ENCODE measurements at regions of chr11 and their contacts with region 1.

Region 1: DNA sequence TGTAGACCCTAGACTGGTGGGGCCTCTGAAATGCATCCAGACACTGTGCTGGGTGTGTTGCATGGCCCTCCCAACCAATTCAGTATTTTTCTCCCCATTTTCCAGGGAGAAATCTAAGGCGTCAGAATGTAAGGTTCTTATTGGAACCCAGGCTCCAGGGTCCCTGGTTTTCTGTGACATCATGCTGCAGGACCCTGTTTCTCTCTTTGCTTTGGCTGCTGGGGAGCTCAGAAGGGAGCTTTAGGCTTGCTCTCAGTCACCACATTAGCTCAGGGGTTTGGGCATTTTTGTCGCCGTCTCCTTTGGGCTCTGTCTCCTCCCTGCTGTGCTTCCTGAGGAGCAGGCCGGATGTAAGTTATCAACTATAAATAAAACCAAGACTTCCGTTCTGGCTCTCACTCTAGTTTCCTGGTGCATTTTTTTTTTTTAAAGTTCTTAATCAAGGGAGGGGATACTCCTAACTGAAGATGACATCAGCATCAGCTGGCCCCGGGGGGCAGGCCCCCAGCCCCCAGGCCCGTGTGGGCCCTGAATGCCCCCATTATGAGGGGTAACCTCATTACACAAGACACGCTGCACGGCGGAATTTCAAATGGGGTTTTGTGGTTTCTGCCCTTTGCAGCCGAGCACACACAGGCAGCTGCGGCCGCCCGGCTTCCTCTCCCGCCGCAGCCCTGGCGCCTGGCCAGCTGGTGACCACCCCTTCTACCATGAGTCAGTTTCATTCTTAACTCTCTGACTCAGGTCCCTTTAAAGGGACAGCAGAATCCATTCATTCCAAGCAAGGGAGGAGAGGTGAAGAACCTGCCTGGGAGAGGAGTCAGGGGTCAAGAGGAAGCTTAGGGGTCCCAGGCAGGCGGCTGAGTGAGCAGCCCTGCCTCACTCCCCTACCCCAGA is 3.2 kb downstream of the MYEOV start:
- DNase-seq: peak; percentile 94
- ATAC-seq: peak; percentile 77 to 78
- H3K4me3 ChIP-seq: peak overlapping the region; percentile 39
- H3K27ac ChIP-seq: peak overlapping the region; percentile 88
- H3K4me1 ChIP-seq: peaks cover 79% of the 10 kb centered on the region
- H3K27me3 ChIP-seq: no peaks in the 10 kb centered on the region
- CTCF ChIP-seq: no peak

Region 2: GRCh38 chr11:69436973-69437875 is 140.1 kb after region 1 on chr11:
- intact Hi-C with region 1: no loop called
- DNase-seq: peak; percentile 84
- ATAC-seq: peak; percentile 90 to 92
- H3K4me3 ChIP-seq: no peak overlapping the region
- H3K27ac ChIP-seq: peak overlapping the region; percentile 39
- H3K4me1 ChIP-seq: peaks cover 7% of the 10 kb centered on the region
- H3K27me3 ChIP-seq: no peaks in the 10 kb centered on the region
- CTCF ChIP-seq: no peak

Region 3: DNA sequence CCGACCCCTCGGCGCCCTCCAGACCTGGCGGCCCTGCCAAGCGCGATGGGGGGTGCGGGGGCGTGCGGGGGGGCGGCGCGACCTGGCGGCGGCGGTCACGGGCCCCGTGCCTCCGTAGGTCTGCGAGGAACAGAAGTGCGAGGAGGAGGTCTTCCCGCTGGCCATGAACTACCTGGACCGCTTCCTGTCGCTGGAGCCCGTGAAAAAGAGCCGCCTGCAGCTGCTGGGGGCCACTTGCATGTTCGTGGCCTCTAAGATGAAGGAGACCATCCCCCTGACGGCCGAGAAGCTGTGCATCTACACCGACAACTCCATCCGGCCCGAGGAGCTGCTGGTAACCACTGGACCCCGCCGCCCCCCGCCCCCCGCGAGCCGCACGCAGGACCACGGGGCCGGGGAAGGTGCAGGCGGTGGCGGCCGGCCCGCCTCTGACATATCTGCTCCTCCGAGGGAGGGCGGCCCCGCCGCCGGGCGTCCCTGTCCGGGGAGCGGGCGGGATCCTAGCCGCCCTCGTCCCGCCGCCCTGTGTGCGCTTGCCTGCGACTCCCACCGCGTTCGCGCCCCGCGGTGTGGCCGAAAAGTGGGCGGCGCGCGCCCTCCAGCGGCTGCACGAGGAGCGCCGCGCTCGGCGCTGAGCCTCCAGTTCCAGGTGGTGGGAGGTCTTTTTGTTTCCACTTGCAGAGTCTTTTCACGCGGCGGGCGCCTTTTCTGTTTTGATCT is 345.9 kb after region 1 on chr11:
- intact Hi-C with region 1: loop called (anchors 10 kb)
- DNase-seq: peak; percentile 85
- ATAC-seq: peak; percentile 72 to 77
- H3K4me3 ChIP-seq: peak overlapping the region; percentile 80
- H3K27ac ChIP-seq: peak overlapping the region; percentile 89
- H3K4me1 ChIP-seq: peaks cover 54% of the 10 kb centered on the region
- H3K27me3 ChIP-seq: peaks cover 26% of the 10 kb centered on the region
- CTCF ChIP-seq: peak; percentile 95